Right ventricle myocardium superior (tissue), 1 donor: ENCODE measurements at regions of chr11 and their contacts with region 1.

Region 1: GRCh38 chr11:80650966-80651365 is 1210.1 kb upstream of the TENM4 start:
- DNase-seq: no peak
- ATAC-seq: no peak

Region 2: GRCh38 chr11:80532633-80533216 is 118.2 kb before region 1 on chr11:
- intact Hi-C with region 1: no loop called
- DNase-seq: no peak
- ATAC-seq: no peak

Region 3: DNA sequence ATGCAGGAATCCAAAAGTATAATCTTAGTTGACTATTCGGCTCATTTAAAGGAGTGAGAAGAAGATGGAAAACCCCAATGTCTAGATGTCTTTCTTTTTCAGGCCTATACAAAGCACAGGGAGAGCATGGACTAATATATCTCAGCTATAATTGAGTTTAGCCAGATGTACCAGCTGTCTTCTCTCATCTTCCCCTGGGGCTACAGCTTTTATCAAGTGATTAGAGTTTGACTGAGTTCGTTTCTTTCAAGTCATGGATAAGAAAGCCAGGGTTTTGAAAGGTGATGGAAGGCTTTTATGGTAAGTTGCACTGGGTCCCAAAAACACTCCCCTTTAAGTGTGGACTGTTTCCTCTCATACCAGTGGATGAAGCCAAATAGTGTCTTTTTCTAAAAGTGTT is 37.3 kb before region 1 on chr11:
- intact Hi-C with region 1: no loop called
- DNase-seq: no peak
- ATAC-seq: no peak

Region 4: DNA sequence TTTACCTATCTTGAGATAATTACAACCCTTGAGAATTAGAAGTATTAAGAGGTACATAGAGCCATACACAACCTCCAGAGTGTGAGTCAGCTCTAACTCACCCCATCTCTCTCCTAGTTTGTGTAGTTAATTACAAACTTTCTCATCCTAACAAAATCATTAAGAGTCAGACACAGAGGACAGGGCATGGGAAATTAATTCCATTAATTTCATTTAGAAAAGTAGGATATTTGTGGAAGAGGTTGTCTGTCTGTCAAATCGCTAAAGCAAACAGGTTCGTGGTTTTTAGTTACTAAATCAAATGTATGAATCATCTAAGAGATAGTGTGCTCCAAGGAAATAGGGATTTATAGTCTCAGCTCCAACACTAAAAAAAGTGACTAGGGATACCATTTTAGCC is 51.3 kb after region 1 on chr11:
- intact Hi-C with region 1: loop called (anchors 10 kb)
- DNase-seq: no peak
- ATAC-seq: no peak

Region 5: GRCh38 chr11:80798174-80798573 is 147.2 kb after region 1 on chr11:
- intact Hi-C with region 1: no loop called
- DNase-seq: no peak
- ATAC-seq: no peak